ENCODE measurements at regions of chr7 and their contacts with region 1.

Region 1: GRCh38 chr7:107579885-107580715 is at the start of gene BCAP29:
- DNase-seq: peak; percentile 76
- ATAC-seq: peak; percentile 84
- H3K4me3 ChIP-seq: peak within 1 kb of the TSS; percentile 93
- H3K27ac ChIP-seq: peak within 1 kb of the TSS; percentile 58
- H3K4me1 ChIP-seq: peaks cover 19% of the 10 kb centered on the region
- H3K27me3 ChIP-seq: no peaks in the 10 kb centered on the region
- CTCF ChIP-seq: peak; percentile 33; the same call in 1 of the 2 replicates
- total RNA-seq, gene BCAP29: 32.0 and 65.9 TPM in 2 replicates

Region 2: DNA sequence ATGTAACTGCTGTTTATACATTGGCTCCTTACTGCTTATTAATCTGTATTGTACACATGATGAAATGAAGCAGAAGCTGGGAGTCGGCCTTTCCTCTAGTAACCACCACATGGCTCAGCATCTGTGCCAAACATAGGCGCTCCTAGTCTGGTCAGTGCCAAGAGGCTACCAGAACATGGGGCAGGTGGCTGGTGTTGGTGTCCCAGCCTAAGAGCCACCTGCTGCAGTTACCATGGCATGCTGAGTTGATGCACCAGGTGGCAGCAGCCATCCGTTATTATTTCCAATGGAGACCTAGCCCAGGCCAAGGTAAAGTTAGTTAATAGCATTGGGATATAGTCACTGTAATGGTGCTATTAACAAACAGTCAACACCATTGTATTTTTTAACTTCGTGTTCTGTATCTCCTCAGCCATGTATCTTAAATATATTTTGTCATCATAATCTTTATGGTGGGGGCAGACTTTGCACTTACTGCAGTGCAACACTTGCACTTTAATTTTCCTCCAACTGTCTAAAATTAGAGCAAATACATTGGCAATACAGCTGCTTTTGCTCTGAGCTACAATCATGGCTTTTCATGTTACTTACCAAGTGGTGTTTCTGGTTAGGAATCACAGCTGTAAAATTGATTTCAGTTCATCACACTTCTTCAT is 378.2 kb before region 1 on chr7:
- CTCF ChIA-PET with region 1: no interaction called
- POLR2A ChIA-PET with region 1: no interaction called
- intact Hi-C with region 1: loop called (anchors 5 kb)
- DNase-seq: peak; percentile 80
- ATAC-seq: peak; percentile 87
- H3K4me3 ChIP-seq: no peak overlapping the region
- H3K27ac ChIP-seq: no peak overlapping the region
- H3K4me1 ChIP-seq: peaks cover 11% of the 10 kb centered on the region
- H3K27me3 ChIP-seq: no peaks in the 10 kb centered on the region
- CTCF ChIP-seq: peak; percentile 81

Region 3: DNA sequence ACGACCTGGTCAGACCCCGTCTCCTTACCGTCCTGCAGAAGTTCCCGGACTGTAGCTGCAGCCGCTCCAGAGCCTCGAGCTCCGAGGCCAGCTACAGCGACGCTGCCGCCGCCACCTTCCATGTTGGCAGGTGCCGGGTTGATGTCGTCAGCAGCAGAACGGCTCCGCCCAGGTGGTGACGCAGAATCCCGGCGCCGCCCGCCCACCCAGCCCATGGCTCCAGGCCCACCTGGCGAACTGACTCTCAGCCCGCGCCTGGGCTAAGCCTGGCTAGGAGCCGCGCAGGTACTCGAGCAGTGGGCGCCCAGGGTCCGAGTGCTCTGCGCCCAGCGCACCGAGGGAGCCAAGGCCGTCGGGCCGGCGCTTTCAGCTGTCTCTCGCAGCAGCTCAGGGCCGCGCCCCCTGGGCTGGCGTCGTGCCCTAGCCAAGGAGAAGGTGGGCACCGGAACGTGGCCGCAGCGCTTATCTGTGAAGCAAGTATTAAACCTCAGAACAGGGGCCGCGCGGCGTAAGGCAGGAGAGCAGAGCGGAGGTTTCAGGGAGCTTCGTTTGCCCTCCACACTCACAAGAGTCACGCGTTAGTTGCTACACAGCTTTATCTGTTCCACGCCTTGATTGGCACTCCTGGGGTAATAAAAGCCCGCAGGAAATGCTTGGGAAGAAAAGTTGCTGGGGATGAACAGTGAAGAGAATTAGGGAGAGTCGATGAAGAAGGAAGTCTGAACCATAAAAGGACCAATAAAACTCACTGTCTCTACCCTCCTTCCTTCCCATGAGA is 16.1 kb before region 1 on chr7 and contains the starts of genes COG5 and DUS4L:
- CTCF ChIA-PET with region 1: no interaction called
- POLR2A ChIA-PET with region 1: interaction called, 5 read pairs
- intact Hi-C with region 1: loop called (anchors 2 kb)
- DNase-seq: peak; percentile 81
- ATAC-seq: peak; percentile 66
- H3K4me3 ChIP-seq: peak within 1 kb of the TSS; percentile 87
- H3K27ac ChIP-seq: peak within 1 kb of the TSS; percentile 97
- H3K4me1 ChIP-seq: peaks cover 55% of the 10 kb centered on the region
- H3K27me3 ChIP-seq: no peaks in the 10 kb centered on the region
- CTCF ChIP-seq: no peak
- total RNA-seq, gene COG5: 46.5 and 51.7 TPM in 2 replicates
- total RNA-seq, gene DUS4L: 10.2 and 12.9 TPM in 2 replicates

Region 4: DNA sequence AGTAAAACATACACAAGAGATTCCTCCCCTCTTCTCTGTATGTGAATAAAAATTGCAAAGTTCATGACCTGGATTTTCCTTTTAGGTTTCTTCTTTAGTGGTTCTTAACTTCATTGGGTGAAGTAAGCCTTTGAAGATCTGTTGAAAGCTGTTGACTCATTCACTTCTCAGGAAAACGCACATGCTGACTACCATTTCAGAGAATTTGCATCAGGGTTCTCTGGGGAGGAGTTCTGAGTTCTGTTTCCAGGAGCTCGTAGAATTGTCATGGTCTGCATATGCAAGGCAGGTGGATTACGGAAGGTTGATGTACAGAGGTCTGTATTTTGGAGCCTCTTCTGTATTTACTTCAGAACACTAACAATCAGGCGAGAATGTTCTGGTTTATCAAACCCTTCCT is 79.6 kb after region 1 on chr7:
- CTCF ChIA-PET with region 1: no interaction called
- POLR2A ChIA-PET with region 1: no interaction called
- intact Hi-C with region 1: loop called (anchors 5 kb)
- DNase-seq: peak; percentile 44
- ATAC-seq: no peak
- H3K4me3 ChIP-seq: no peak overlapping the region
- H3K27ac ChIP-seq: no peak overlapping the region
- H3K4me1 ChIP-seq: no peaks in the 10 kb centered on the region
- H3K27me3 ChIP-seq: peaks cover 25% of the 10 kb centered on the region
- CTCF ChIP-seq: no peak

Region 5: DNA sequence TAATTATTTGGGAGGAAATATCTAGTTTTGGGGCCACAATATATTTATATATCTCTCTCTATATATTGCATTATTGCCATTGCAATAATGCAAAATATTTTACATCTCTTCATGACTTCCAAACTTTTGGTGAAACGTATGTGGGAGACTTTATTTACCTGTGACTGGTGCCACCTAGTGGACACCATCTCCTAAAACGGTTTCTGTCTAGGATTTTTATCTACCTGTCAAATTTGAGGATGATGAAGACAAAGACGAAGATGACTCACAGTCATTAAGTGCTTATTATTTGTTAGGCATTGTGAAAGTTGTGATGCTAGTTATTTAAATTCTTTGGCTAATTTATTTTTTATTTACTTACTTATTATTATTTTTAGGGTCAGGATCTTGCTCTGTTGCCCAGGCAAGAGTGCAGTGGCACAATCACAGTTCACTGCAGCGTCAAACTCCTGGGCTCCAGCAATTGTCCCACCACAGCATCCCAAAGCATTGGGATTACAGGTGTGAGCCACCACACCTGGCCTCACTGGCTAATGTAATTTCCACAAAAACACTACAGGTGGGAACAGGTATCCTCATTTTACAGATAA is 145.1 kb after region 1 on chr7:
- CTCF ChIA-PET with region 1: no interaction called
- POLR2A ChIA-PET with region 1: no interaction called
- intact Hi-C with region 1: loop called (anchors 2 kb)
- DNase-seq: peak; percentile 84
- ATAC-seq: peak; percentile 63
- H3K4me3 ChIP-seq: no peak overlapping the region
- H3K27ac ChIP-seq: no peak overlapping the region
- H3K4me1 ChIP-seq: no peaks in the 10 kb centered on the region
- H3K27me3 ChIP-seq: no peaks in the 10 kb centered on the region
- CTCF ChIP-seq: peak; percentile 77

Region 6: DNA sequence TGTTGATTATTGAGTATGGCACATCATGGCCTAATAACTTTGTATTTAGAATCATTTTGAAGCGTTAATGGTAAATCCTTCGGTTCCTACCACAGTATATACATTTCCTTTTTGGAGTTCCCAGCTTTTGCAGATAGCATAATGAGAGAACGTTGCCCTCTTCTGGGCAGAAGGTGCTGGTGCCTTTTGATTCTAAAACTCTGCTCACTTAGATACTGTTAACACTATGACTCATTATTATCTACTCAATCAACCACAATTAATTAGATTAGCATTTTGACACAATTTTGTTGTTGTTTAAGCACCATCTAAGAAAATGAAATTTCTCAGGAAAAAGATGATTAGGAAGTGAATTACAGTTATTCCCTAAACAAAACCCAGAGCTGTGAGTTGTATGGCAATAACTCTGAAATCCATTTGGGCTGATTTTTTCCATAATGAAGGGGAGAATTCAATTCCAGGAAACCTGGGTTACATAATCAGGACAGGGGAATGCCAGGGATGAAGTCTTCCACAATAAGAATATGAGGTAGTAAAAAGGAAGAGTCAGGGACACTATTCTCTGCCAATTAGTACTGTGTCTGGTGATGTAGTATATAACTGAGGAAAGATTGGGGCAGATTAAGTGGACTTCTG is 299.4 kb after region 1 on chr7:
- CTCF ChIA-PET with region 1: no interaction called
- POLR2A ChIA-PET with region 1: interaction called, 3 read pairs
- intact Hi-C with region 1: loop called (anchors 10 kb)
- DNase-seq: peak; percentile 70
- ATAC-seq: peak; percentile 78
- H3K4me3 ChIP-seq: peak overlapping the region; percentile 38; the same call in 1 of the 2 replicates
- H3K27ac ChIP-seq: no peak overlapping the region
- H3K4me1 ChIP-seq: peaks cover 5% of the 10 kb centered on the region; the same call in 1 of the 2 replicates
- H3K27me3 ChIP-seq: no peaks in the 10 kb centered on the region
- CTCF ChIP-seq: peak; percentile 79

Measured in PC-3 (cell line).